ENCODE measurements at regions of chr2 and their contacts with region 1.

Region 1: DNA sequence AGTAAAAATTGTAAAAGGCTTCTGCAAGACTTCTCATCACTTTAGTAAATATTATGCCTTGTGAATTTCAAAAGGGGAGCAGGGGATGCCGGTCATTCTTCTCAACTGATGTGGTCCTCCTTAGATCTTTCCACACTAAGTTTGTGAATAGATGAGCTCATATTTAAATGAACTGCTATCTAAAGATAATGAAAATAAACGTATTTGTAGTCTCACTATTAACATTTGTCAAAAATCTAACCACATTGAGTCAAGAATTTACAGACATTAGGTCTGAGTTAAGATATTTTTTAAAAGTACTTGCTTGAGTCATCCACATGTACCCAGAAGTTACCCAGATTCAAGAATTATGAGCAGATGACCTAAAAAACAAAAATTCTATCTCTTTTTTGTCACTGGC is 6.5 kb downstream of the PRPF40A start:
- DNase-seq: no peak
- H3K4me3 Mint-ChIP-seq: no peak overlapping the region
- H3K27ac Mint-ChIP-seq: no peak overlapping the region
- H3K4me1 Mint-ChIP-seq: peaks cover 26% of the 10 kb centered on the region
- H3K27me3 Mint-ChIP-seq: no peaks in the 10 kb centered on the region

Region 2: GRCh38 chr2:152674334-152674733 is 36.4 kb before region 1 on chr2:
- intact Hi-C with region 1: loop called (anchors 5 kb)
- DNase-seq: no peak
- H3K4me3 Mint-ChIP-seq: no peak overlapping the region
- H3K27ac Mint-ChIP-seq: no peak overlapping the region
- H3K4me1 Mint-ChIP-seq: peaks cover 5% of the 10 kb centered on the region
- H3K27me3 Mint-ChIP-seq: no peaks in the 10 kb centered on the region

Measured in activated CD4-positive, alpha-beta T cell treated with anti-CD3 and anti-CD28 coated beads, Interleukin-2, amount 10 ng/mL, durations not matched to agents 24 days and 14 days (primary cell).